Left lung (tissue), 14 donors: ENCODE measurements at regions of chr9 and their contacts with region 1.

Region 1: GRCh38 chr9:73023025-73023541 is 70.2 kb upstream of the ALDH1A1 start:
- DNase-seq: peak in 3 of 4 donors; percentile 34 to 79 (median 49)
- ATAC-seq: peak; percentile 84
- H3K4me3 ChIP-seq: no peak overlapping the region
- H3K27ac ChIP-seq: no peak overlapping the region
- H3K4me1 ChIP-seq: peaks cover 0 to 6% of the 10 kb centered on the region in 2 donors
- H3K27me3 ChIP-seq: no peaks in the 10 kb centered on the region
- CTCF ChIP-seq: peak; percentile 38 to 73

Region 2: DNA sequence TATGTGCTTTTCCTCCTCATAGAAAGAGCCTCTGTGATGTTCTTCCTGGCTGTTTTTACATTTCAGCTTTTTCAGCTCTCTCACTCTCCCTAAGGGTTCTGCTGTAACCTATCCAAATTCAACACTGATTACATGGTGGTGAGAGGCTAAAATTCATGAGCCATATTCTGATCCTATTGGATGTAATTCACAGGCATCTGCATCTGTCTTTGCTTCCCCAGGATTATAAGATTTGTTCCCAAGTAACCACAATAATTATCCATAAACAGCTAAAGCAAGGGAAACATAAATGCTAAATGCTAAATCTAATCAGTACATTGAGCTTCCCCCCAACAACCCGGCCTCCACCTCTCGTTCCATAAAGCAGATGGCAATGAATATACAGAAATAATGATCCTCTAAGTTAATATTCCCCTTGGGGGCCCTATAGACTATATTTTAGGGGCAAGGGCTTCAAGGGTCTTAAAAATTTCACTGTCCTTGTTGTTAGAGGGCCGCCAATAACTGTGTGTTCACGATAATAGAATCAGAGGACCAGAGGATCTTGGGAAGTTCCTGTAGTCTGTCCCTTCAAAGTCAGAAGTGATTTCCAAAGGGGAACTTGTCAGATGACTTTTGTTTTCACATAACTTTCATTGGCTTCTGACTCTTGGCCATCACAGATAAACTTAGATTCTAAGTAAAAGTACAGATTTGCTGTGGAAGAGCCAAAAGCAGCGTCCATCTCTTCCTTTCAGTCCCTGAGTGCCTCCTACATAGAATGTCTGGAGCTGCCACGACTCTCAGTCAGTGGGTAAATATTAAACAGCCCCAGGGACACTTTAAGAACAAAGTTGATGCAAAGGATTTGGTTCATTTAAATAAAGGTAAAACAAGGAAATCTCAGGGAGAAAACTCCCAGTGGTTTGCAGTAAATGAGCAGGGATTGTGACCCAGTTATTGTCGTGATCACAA is 195.8 kb before region 1 on chr9:
- intact Hi-C with region 1: no loop called
- DNase-seq: no peak
- ATAC-seq: peak; percentile 54
- H3K4me3 ChIP-seq: no peak overlapping the region
- H3K27ac ChIP-seq: peak overlapping the region in 1 of 2 donors; percentile 20
- H3K4me1 ChIP-seq: no peaks in the 10 kb centered on the region
- H3K27me3 ChIP-seq: no peaks in the 10 kb centered on the region
- CTCF ChIP-seq: no peak

Region 3: GRCh38 chr9:72871685-72872084 is 151.4 kb before region 1 on chr9:
- intact Hi-C with region 1: loop called in 1 of 2 experiments (anchors 5 kb)
- DNase-seq: peak in 2 of 4 donors; percentile 58 to 64
- ATAC-seq: peak; percentile 46
- H3K4me3 ChIP-seq: no peak overlapping the region
- H3K27ac ChIP-seq: no peak overlapping the region
- H3K4me1 ChIP-seq: no peaks in the 10 kb centered on the region
- H3K27me3 ChIP-seq: no peaks in the 10 kb centered on the region
- CTCF ChIP-seq: peak in 1 of 2 donors; percentile 21

Region 4: GRCh38 chr9:72960446-72960845 is 62.6 kb before region 1 on chr9:
- intact Hi-C with region 1: no loop called
- DNase-seq: no peak
- ATAC-seq: peak; percentile 59
- H3K4me3 ChIP-seq: no peak overlapping the region
- H3K27ac ChIP-seq: no peak overlapping the region
- H3K4me1 ChIP-seq: no peaks in the 10 kb centered on the region
- H3K27me3 ChIP-seq: no peaks in the 10 kb centered on the region
- CTCF ChIP-seq: no peak

Region 5: DNA sequence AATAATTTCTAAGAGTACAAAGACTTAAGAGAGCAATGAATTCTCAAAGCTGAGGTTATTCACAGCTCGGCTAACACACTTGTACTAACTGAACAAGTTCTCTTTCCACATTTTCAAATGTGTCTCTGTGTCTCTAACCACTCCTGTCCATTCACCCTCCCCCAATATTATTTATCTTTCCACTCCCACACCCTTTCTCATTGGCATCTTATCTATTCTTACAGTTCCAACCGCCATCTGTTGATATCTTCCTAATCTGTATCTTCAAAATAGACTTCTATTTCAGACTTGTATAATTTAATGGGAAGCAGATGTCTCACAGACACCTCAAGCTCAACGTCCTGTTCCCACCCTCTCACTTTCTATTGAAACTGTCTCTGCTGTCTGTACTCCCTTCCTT is 334.5 kb after region 1 on chr9:
- intact Hi-C with region 1: no loop called
- DNase-seq: no peak
- ATAC-seq: no peak
- H3K4me3 ChIP-seq: no peak overlapping the region
- H3K27ac ChIP-seq: no peak overlapping the region
- H3K4me1 ChIP-seq: no peaks in the 10 kb centered on the region
- H3K27me3 ChIP-seq: no peaks in the 10 kb centered on the region
- CTCF ChIP-seq: no peak